HepG2 (cell line): ENCODE measurements at regions of chr17 and their contacts with region 1.

Region 1: DNA sequence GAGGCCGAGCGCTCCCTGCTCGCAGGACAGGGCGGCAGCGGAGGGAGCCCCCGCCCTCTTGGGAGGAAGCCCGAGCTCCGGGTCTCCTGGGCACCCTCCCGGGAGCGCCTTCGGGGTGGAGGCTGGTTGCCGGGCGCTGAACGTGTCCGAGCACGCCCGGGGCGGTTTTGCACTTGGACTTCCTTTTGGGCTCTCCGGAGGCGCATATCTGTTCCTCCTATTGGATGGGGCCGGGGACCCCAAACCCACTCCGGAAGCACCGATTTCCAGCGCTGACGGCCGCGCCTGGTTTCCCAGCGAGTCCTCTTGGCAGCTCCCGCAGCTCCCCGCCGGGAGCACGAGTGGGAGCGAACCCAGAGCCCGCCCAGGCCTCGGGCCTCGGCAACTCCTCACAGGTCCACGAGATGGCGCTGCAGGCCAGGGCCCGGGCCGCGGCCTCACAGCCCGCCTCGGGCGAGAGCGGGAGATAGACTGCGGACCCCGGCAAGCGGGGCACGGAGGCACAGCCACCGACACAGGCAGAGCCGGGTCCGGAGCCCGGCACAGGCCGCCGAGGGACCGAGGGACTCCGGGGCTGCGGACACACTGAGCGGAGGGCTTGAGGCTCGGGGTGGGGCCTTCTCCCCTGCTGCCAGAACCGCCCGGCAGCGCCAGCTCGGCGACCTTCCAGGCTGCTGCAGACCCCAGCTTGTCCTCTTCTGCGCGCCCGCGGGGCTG is 12.7 kb downstream of the TBX2 start:
- DNase-seq: peak; percentile 64
- ATAC-seq: peak; percentile 73
- H3K4me3 ChIP-seq: peak overlapping the region; percentile 69 to 86 (median 77)
- H3K27ac ChIP-seq: peak overlapping the region; percentile 68
- H3K4me1 ChIP-seq: peaks cover 69% of the 10 kb centered on the region
- H3K27me3 ChIP-seq: no peaks in the 10 kb centered on the region
- CTCF ChIP-seq: peak; percentile 99
- EP300 ChIP-seq: peak in 1 of 2 experiments; percentile 40; a peak in 1 of 4 replicates
- POLR2A ChIP-seq: peak in 1 of 2 experiments; percentile 53; a peak in 3 of 4 replicates
- RAD21 ChIP-seq: peak; percentile 100

Region 2: GRCh38 chr17:61064078-61064951 is 348.0 kb before region 1 on chr17:
- CTCF ChIA-PET with region 1: no interaction called
- POLR2A ChIA-PET with region 1: no interaction called
- in situ Hi-C with region 1: no loop called
- intact Hi-C with region 1: loop called (anchors 1 kb)
- DNase-seq: no peak
- ATAC-seq: no peak
- H3K4me3 ChIP-seq: no peak overlapping the region
- H3K27ac ChIP-seq: no peak overlapping the region
- H3K4me1 ChIP-seq: peaks cover 23% of the 10 kb centered on the region
- H3K27me3 ChIP-seq: no peaks in the 10 kb centered on the region
- CTCF ChIP-seq: no peak
- EP300 ChIP-seq: no peak
- POLR2A ChIP-seq: no peak
- RAD21 ChIP-seq: no peak

Region 3: DNA sequence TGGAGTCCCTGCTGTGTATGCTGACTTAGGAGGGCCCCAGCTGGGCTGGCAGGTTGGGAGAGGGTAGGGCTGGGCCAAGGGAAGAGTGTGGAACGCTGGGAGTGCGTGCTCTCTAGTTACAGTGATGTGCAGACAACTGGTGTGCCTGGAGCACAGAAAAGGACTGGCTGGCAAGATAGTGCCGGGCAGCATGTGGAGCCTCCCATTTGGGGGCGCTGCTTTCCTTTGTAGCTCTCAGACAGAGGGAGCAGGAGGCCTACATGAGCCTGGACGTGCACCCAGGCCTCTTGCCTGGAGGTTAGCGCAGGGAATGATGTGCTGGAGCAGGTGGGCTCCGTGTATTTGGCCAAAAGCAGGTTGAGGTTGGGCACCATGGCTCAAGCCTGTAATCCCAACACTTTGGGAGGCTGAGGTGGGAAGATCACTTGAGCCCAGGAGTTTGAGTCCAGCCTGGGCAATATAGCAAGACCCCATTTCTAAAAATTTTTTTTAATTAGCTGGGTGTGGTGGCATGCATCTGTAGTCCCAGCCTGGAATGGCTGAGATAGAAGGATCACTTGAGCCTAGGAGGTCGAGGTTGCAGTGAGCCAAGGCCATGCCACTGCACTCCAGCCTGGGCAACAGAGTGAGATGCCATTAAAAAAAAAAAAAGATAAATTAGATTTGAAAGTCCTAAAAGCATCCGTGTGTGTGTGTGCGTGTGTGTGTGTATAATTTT is 13.9 kb after region 1 on chr17:
- CTCF ChIA-PET with region 1: no interaction called
- POLR2A ChIA-PET with region 1: interaction called, 13 read pairs
- in situ Hi-C with region 1: no loop called
- intact Hi-C with region 1: no loop called
- DNase-seq: peak; percentile 85
- ATAC-seq: peak; percentile 94
- H3K4me3 ChIP-seq: 0 out of 6 replicates have a peak overlapping the region, but pooled peaks of 1 of the 3 experiments have one; percentile 23
- H3K27ac ChIP-seq: peak overlapping the region; percentile 57
- H3K4me1 ChIP-seq: peaks cover 41% of the 10 kb centered on the region
- H3K27me3 ChIP-seq: no peaks in the 10 kb centered on the region
- CTCF ChIP-seq: peak; percentile 98
- EP300 ChIP-seq: 0 out of 4 replicates have a peak, but pooled peaks of 1 of the 2 experiments have one; percentile 28
- POLR2A ChIP-seq: no peak
- RAD21 ChIP-seq: peak; percentile 97

Region 4: GRCh38 chr17:61568219-61569072 is 156.1 kb after region 1 on chr17:
- CTCF ChIA-PET with region 1: interaction called, 18 read pairs
- POLR2A ChIA-PET with region 1: interaction called, 16 read pairs
- in situ Hi-C with region 1: no loop called
- intact Hi-C with region 1: no loop called
- DNase-seq: peak; percentile 94
- ATAC-seq: peak; percentile 97
- H3K4me3 ChIP-seq: no peak overlapping the region
- H3K27ac ChIP-seq: peak overlapping the region; percentile 34
- H3K4me1 ChIP-seq: peaks cover 25% of the 10 kb centered on the region
- H3K27me3 ChIP-seq: no peaks in the 10 kb centered on the region
- CTCF ChIP-seq: no peak
- EP300 ChIP-seq: peak; percentile 47 to 89; a peak in 2 of 4 replicates
- POLR2A ChIP-seq: no peak
- RAD21 ChIP-seq: no peak

Region 5: GRCh38 chr17:61635913-61636432 is 223.7 kb after region 1 on chr17:
- CTCF ChIA-PET with region 1: no interaction called
- POLR2A ChIA-PET with region 1: no interaction called
- in situ Hi-C with region 1: no loop called
- intact Hi-C with region 1: loop called (anchors 2 kb)
- DNase-seq: peak; percentile 62
- ATAC-seq: peak; percentile 58
- H3K4me3 ChIP-seq: no peak overlapping the region
- H3K27ac ChIP-seq: no peak overlapping the region
- H3K4me1 ChIP-seq: no peaks in the 10 kb centered on the region
- H3K27me3 ChIP-seq: no peaks in the 10 kb centered on the region
- CTCF ChIP-seq: peak; percentile 91
- EP300 ChIP-seq: no peak
- POLR2A ChIP-seq: no peak
- RAD21 ChIP-seq: peak; percentile 83